Natural killer cell (primary cell): ENCODE measurements at regions of chr2 and their contacts with region 1.

Region 1: GRCh38 chr2:230987137-230988020 is 8.5 kb upstream of the SPATA3 start:
- DNase-seq: peak; percentile 82 to 86
- ATAC-seq: peak; percentile 77 to 95 (median 93)
- H3K4me3 ChIP-seq: peak overlapping the region; percentile 39
- H3K4me3 Mint-ChIP-seq: peak overlapping the region; percentile 45
- H3K27ac ChIP-seq: no peak overlapping the region
- H3K27ac Mint-ChIP-seq: no peak overlapping the region
- H3K4me1 ChIP-seq: peaks cover 8% of the 10 kb centered on the region
- H3K4me1 Mint-ChIP-seq: peaks cover 0 to 7% of the 10 kb centered on the region in 2 donors
- H3K27me3 ChIP-seq: peaks cover 10% of the 10 kb centered on the region
- H3K27me3 Mint-ChIP-seq: peaks cover 49 to 60% of the 10 kb centered on the region in 2 donors
- CTCF ChIP-seq: peak; percentile 96

Region 2: DNA sequence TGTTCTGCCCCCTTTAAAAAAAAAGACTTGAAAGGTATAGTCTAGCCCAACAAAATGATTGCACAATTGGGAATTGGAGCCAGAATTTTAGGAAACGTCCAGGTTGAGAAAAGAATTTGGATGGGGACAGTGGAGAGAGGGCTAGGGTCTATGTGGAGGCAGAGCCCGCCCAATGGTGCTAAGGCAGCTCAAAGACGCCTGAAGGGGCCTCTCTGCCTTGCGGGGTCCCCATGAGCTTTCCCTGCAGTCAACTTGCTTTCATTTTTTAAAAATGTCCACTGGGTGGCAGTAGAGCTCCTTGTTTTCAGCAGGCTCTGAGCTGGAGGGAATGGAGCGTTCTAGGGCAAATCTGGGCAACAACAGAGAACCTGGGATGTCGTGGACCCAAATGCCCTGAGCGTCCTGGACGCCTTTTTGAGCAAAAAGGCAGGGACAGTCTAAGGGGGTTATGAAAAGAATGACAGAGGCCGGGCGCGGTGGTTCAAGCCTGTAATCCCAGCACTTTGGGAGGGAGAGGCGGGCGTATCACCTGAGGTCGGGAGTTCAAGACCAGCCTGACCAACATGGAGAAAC is 162.9 kb before region 1 on chr2:
- intact Hi-C with region 1: loop called (anchors 1 kb)
- DNase-seq: peak in 1 of 2 donors; percentile 91
- ATAC-seq: peak; percentile 81 to 88 (median 85)
- H3K4me3 ChIP-seq: no peak overlapping the region
- H3K4me3 Mint-ChIP-seq: no peak overlapping the region
- H3K27ac ChIP-seq: no peak overlapping the region
- H3K27ac Mint-ChIP-seq: no peak overlapping the region
- H3K4me1 ChIP-seq: peaks cover 14% of the 10 kb centered on the region
- H3K4me1 Mint-ChIP-seq: peaks cover 7 to 14% of the 10 kb centered on the region in 2 donors
- H3K27me3 ChIP-seq: peaks cover 13% of the 10 kb centered on the region
- H3K27me3 Mint-ChIP-seq: peaks cover 30 to 33% of the 10 kb centered on the region in 2 donors
- CTCF ChIP-seq: peak; percentile 76

Region 3: DNA sequence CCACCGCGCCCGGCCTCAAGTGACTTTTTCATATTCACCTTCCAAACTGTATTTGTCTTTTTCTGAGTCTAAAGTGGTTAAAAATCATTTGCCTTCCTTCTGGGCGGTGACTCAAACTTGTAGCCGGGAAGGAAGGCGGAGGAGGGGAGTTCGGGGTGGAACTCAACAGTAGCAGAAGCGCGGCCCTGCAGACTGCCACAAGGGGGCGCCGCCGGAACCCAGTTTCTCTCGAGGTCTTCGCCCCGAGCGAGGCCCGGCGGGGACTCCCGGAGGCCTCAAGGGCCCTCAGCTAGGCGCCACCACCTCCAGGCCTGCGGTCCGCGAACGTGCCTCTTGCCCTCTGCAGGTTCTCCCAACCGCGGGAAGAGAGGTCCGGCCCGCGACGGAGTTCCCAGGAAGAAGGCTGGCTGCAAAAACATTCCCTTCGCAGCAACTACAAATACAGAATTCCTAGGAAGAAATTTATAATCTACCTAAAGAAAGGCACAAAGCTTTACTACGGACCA is 139.4 kb before region 1 on chr2:
- intact Hi-C with region 1: loop called (anchors 1 kb)
- DNase-seq: peak; percentile 83 to 90
- ATAC-seq: peak; percentile 76 to 96 (median 95)
- H3K4me3 ChIP-seq: no peak overlapping the region
- H3K4me3 Mint-ChIP-seq: no peak overlapping the region
- H3K27ac ChIP-seq: no peak overlapping the region
- H3K27ac Mint-ChIP-seq: no peak overlapping the region
- H3K4me1 ChIP-seq: peaks cover 7% of the 10 kb centered on the region
- H3K4me1 Mint-ChIP-seq: peaks cover 10 to 13% of the 10 kb centered on the region in 2 donors
- H3K27me3 ChIP-seq: peaks cover 21% of the 10 kb centered on the region
- H3K27me3 Mint-ChIP-seq: peaks cover 56 to 83% of the 10 kb centered on the region in 2 donors
- CTCF ChIP-seq: peak; percentile 90

Region 4: DNA sequence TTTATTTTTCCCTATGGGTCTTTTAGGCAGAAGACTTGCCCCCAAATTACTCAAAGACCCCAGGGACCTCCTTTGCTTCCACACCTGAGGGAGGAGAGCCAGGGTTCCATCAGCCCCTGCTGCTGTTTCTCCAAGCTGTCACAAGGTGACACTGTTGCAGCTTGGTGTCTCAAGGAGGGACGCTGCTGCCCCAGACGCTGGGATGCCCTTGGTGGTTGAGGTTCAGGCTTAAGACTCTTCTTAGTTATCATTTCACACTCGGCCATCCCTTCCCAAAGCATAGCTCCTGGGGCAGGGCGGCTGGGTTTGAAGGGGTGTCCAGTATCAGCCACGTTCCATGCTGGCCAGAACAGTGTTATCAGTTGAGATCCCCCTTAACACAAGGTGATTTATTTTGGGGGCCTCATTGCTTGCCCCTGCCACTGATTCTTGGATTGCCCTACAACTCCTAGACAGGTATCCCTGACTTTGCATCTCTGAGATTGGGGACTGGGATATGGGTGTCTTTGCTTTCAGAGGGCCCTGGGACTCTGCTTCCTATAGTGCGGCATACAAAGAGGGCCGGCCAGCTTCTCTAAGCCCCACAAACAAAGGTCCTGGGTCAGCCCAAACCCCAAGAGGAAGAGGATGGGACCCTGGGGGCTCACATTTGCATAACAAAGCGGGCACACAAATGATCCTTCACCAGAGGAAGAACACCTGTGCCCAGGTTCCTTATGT is 85.0 kb before region 1 on chr2:
- intact Hi-C with region 1: loop called (anchors 1 kb)
- DNase-seq: peak; percentile 30 to 70
- ATAC-seq: peak; percentile 82 to 95 (median 94)
- H3K4me3 ChIP-seq: no peak overlapping the region
- H3K4me3 Mint-ChIP-seq: no peak overlapping the region
- H3K27ac ChIP-seq: no peak overlapping the region
- H3K27ac Mint-ChIP-seq: no peak overlapping the region
- H3K4me1 ChIP-seq: peaks cover 4% of the 10 kb centered on the region
- H3K4me1 Mint-ChIP-seq: no peaks in the 10 kb centered on the region
- H3K27me3 ChIP-seq: peaks cover 8% of the 10 kb centered on the region
- H3K27me3 Mint-ChIP-seq: peaks cover 62 to 73% of the 10 kb centered on the region in 2 donors
- CTCF ChIP-seq: peak; percentile 70